ENCODE measurements at regions of chr2 and their contacts with region 1.

Region 1: GRCh38 chr2:213251618-213252017 is 32.6 kb upstream of the SPAG16 start:
- DNase-seq: no peak
- H3K4me3 ChIP-seq: no peak overlapping the region
- H3K27ac ChIP-seq: no peak overlapping the region
- H3K4me1 ChIP-seq: peaks cover 0 to 18% (median 3%) of the 10 kb centered on the region in 4 donors
- H3K27me3 ChIP-seq: no peaks in the 10 kb centered on the region
- CTCF ChIP-seq: peak; percentile 59 to 61

Region 2: GRCh38 chr2:213238753-213239495 is 12.7 kb before region 1 on chr2:
- intact Hi-C with region 1: no loop called
- DNase-seq: peak in 1 of 2 donors; percentile 34
- H3K4me3 ChIP-seq: peak overlapping the region; percentile 11 to 23
- H3K27ac ChIP-seq: peak overlapping the region; percentile 63 to 69
- H3K4me1 ChIP-seq: peaks cover 0 to 41% (median 7%) of the 10 kb centered on the region in 4 donors
- H3K27me3 ChIP-seq: no peaks in the 10 kb centered on the region
- CTCF ChIP-seq: no peak

Region 3: GRCh38 chr2:215002500-215002899 is 1750.9 kb after region 1 on chr2:
- intact Hi-C with region 1: loop called (anchors 10 kb)
- DNase-seq: no peak
- H3K4me3 ChIP-seq: no peak overlapping the region
- H3K27ac ChIP-seq: no peak overlapping the region
- H3K4me1 ChIP-seq: peaks cover 0 to 6% (median 0%) of the 10 kb centered on the region in 4 donors
- H3K27me3 ChIP-seq: no peaks in the 10 kb centered on the region
- CTCF ChIP-seq: peak; percentile 42 to 43